Lower leg skin (tissue), 4 donors: ENCODE measurements at regions of chrX and their contacts with region 1.

Region 1: GRCh38 chrX:116317409-116317808 is 119.0 kb upstream of the SLC6A14 start:
- DNase-seq: no peak
- H3K4me3 ChIP-seq: no peak overlapping the region
- CTCF ChIP-seq: no peak
- POLR2A ChIP-seq: no peak

Region 2: DNA sequence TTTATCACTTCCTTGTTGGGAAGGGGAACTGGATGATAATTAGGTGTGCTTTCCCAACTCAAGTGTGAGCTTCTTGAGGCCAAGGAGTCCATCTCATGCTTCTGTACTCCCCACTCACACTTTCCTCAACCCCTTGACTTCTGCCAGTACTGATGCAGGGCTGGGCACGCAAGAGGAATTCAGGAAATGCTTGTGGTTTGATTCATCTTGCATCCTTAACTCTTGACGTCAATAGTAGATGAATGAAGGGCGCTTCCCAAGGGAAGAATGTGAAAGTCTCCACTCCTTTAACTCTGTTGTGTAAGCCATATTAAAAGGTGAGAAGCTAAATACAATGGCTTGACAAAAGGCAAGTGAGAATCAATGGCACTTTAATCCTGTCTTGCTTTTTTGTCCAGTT is 45.1 kb before region 1 on chrX:
- intact Hi-C with region 1: no loop called
- DNase-seq: no peak
- H3K4me3 ChIP-seq: no peak overlapping the region
- CTCF ChIP-seq: no peak
- POLR2A ChIP-seq: no peak

Region 3: GRCh38 chrX:116298956-116299355 is 18.5 kb before region 1 on chrX:
- intact Hi-C with region 1: loop called (anchors 1 kb)
- DNase-seq: no peak
- H3K4me3 ChIP-seq: no peak overlapping the region
- CTCF ChIP-seq: no peak
- POLR2A ChIP-seq: no peak

Region 4: DNA sequence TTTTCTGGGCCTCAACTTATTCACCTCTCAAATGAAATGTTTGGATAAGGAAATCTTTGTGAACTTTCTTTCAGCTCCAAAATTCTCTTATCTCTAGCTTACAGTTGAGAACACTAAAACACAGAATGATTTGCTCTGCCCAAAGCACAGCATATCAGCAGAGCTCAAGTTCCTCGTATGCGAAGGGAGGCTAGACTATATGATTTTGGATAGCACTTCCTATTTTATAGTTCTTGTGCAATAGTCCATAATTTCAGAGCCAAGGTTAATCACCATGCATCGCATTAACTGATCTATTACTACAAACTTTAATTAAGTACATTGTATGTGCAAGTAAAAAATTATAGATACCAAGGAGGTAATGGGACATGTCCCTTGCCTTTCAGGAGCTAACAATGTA is 1826.2 kb after region 1 on chrX:
- intact Hi-C with region 1: no loop called
- DNase-seq: no peak
- H3K4me3 ChIP-seq: no peak overlapping the region
- CTCF ChIP-seq: no peak
- POLR2A ChIP-seq: no peak